ENCODE measurements at regions of chr1 and their contacts with region 1.

Region 1: DNA sequence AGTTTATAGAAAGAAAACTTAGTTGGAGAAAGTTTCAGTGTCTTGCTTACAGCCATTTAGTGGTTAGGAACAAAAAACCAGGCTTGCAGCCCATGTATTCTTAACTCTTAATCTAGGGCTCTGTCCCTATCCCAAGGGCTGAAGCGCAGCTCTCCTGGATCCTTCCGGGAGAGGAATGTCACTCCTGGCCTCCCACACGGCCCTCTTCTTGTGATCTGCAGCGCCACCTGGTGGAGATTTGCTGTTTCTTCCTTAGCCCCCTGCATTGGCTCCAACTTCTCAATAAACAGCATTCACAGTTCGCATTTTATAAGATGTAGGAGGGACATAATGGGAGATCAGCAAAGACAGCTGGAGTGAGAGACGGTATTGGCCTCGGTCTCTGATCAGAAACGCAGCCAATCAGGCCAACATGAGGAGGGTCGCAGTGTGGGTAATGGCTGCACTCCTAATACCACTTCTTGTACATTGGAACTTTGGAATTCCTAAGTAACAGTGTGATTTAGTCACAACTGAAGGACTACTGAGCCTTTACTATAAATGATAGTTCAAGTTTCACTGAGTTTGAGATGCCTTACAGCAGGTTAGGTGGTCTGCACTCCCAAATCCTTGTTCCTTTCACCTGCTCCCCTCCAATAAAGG is 283.4 kb downstream of the ASTN1 start:
- DNase-seq: peak; percentile 68
- ATAC-seq: peak; percentile 69

Region 2: DNA sequence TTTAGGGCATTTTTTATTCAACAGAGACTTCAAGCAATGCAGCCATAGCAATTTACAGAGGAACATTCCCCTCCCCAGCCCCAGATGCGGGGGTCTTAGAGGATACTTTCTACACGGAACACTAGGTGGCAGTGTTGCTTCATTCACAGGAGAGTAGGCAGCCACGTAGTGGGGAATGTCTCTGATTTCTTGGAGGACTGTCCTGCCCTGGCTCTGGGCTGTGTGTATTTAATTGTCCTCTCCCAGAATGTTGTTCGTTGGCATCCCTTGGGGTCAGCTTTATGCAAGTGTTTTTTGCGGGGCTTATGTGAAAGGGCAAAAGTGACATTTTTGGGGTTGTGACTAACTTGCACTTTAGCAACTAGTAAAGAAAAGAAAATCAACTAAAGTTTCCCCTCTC is 321.2 kb before region 1 on chr1:
- intact Hi-C with region 1: loop called (anchors 1 kb)
- DNase-seq: no peak
- ATAC-seq: peak; percentile 92

Region 3: DNA sequence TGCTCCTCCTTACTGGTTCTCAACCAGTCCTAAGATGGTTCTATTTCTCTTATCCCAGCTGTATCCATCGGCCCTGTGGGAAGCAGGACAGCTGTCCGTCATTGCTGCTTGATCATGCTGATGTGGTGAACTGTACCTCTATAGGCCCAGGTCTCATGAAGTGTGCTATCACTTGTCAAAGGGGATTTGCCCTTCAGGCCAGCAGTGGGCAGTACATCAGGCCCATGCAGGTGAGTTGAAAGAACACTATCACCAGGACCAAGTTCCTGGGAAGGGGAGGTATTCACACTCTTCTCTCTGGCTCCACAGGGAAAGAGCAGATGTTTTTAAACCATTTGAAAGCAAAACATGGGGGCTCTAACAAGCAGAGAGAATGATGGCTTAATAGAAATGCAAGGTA is 115.5 kb before region 1 on chr1:
- intact Hi-C with region 1: no loop called
- DNase-seq: no peak
- ATAC-seq: no peak

Region 4: DNA sequence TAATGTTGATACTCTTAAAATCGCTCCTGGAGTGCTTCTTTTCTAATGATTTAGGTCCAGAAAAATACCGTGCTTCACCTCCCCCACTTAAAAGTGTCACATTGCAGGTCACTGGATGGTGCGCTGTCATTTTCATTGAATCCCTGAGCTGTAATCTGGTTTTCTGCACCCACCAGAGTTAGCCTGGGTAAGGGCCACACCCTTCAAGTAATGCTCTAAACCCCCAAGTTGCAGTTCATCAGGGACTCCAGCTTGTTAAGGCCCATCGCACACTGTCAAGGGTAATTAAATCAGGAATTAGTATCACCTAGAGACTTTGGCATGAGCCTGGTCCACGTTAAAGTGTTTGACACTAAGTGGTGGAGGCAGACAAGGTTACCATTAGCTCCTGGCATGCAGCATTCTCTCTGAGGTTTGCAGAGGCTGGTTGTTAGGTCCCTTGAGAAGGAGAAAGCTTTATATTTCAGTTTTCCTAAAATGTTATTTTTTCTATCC is 249.4 kb after region 1 on chr1:
- intact Hi-C with region 1: no loop called
- DNase-seq: no peak
- ATAC-seq: no peak